ENCODE measurements at regions of chr19 and their contacts with region 1.

Region 1: GRCh38 chr19:36436531-36436930 is 18.1 kb upstream of the ZFP82 start:
- DNase-seq: no peak
- H3K4me3 ChIP-seq: no peak overlapping the region
- H3K27ac ChIP-seq: no peak overlapping the region
- H3K4me1 ChIP-seq: no peaks in the 10 kb centered on the region
- H3K27me3 ChIP-seq: no peaks in the 10 kb centered on the region
- CTCF ChIP-seq: no peak
- EP300 ChIP-seq: no peak
- POLR2A ChIP-seq: no peak

Region 2: GRCh38 chr19:34600366-34600765 is 1836.2 kb before region 1 on chr19:
- in situ Hi-C with region 1: loop called in 1 of 4 experiments (anchors 25 kb)
- intact Hi-C with region 1: no loop called
- DNase-seq: no peak
- H3K4me3 ChIP-seq: no peak overlapping the region
- H3K27ac ChIP-seq: no peak overlapping the region
- H3K4me1 ChIP-seq: no peaks in the 10 kb centered on the region
- H3K27me3 ChIP-seq: no peaks in the 10 kb centered on the region
- CTCF ChIP-seq: no peak
- EP300 ChIP-seq: no peak
- POLR2A ChIP-seq: no peak

Measured in transverse colon (tissue), 4 donors.